Activated naive CD4-positive, alpha-beta T cell treated with anti-CD3 and anti-CD28 coated beads for 36 hours (primary cell): ENCODE measurements at regions of chr3 and their contacts with region 1.

Region 1: GRCh38 chr3:124559881-124560574 is 170.2 kb upstream of the UMPS start:
- DNase-seq: peak; percentile 82
- H3K4me3 Mint-ChIP-seq: no peak overlapping the region
- H3K27ac Mint-ChIP-seq: no peak overlapping the region
- H3K4me1 Mint-ChIP-seq: no peaks in the 10 kb centered on the region
- H3K27me3 Mint-ChIP-seq: peaks cover 17% of the 10 kb centered on the region

Region 2: GRCh38 chr3:124014366-124014942 is 545.6 kb before region 1 on chr3:
- CTCF ChIA-PET with region 1: no interaction called
- intact Hi-C with region 1: loop called (anchors 10 kb)
- DNase-seq: no peak
- H3K4me3 Mint-ChIP-seq: no peak overlapping the region
- H3K27ac Mint-ChIP-seq: no peak overlapping the region
- H3K4me1 Mint-ChIP-seq: no peaks in the 10 kb centered on the region
- H3K27me3 Mint-ChIP-seq: peaks cover 32% of the 10 kb centered on the region

Region 3: GRCh38 chr3:124492811-124493210 is 67.2 kb before region 1 on chr3:
- CTCF ChIA-PET with region 1: interaction called, 7 read pairs
- intact Hi-C with region 1: loop called (anchors 2 kb)
- DNase-seq: peak; percentile 30
- H3K4me3 Mint-ChIP-seq: no peak overlapping the region
- H3K27ac Mint-ChIP-seq: no peak overlapping the region
- H3K4me1 Mint-ChIP-seq: peaks cover 7% of the 10 kb centered on the region
- H3K27me3 Mint-ChIP-seq: peaks cover 15% of the 10 kb centered on the region

Region 4: DNA sequence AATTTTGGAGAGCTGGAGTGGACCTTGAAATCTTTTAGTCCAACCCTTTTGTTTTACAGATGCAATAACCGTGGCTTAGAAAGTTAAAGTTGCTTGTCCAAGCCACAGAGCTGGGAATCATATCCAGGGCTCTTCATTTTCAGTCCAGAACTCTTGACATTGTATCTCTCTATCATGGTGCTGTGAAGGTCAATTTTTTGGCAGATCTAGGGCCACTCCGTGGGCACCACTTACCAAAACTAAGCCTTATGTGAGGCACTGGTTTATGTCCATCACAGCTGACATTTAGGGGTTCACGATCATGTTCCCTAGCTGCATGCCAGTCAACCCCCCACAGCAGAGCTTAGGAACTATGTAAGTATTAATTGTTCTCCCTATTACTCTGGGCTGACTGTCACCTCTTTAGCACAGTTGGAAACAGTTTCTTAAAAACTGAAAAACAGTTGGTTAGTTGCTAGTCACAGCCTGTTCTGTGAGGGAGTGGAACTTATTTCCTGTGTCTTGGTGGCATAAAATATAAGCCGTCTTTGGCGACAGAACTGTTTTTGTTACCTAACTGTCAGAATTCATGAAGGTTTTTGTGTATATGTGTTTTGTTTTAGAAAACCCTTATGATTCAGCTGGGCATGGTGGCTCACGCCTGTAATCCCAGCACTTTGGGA is 19.3 kb before region 1 on chr3:
- CTCF ChIA-PET with region 1: interaction called, 10 read pairs
- intact Hi-C with region 1: no loop called
- DNase-seq: no peak
- H3K4me3 Mint-ChIP-seq: no peak overlapping the region
- H3K27ac Mint-ChIP-seq: no peak overlapping the region
- H3K4me1 Mint-ChIP-seq: no peaks in the 10 kb centered on the region
- H3K27me3 Mint-ChIP-seq: peaks cover 3% of the 10 kb centered on the region

Region 5: GRCh38 chr3:124545891-124546290 is 14.1 kb before region 1 on chr3:
- CTCF ChIA-PET with region 1: interaction called, 49 read pairs
- intact Hi-C with region 1: no loop called
- DNase-seq: no peak
- H3K4me3 Mint-ChIP-seq: no peak overlapping the region
- H3K27ac Mint-ChIP-seq: no peak overlapping the region
- H3K4me1 Mint-ChIP-seq: no peaks in the 10 kb centered on the region
- H3K27me3 Mint-ChIP-seq: peaks cover 12% of the 10 kb centered on the region